AG04450 (cell line): ENCODE measurements at regions of chr10 and their contacts with region 1.

Region 1: GRCh38 chr10:127207081-127207480 is 10.7 kb upstream of the INSYN2A start:
- DNase-seq: no peak
- H3K4me3 ChIP-seq: no peak overlapping the region
- H3K27ac ChIP-seq: no peak overlapping the region
- H3K27me3 ChIP-seq: no peaks in the 10 kb centered on the region
- CTCF ChIP-seq: no peak

Region 2: GRCh38 chr10:127168261-127168660 is 38.8 kb before region 1 on chr10:
- CTCF ChIA-PET with region 1: no interaction called
- POLR2A ChIA-PET with region 1: no interaction called
- DNase-seq: no peak
- H3K4me3 ChIP-seq: no peak overlapping the region
- H3K27ac ChIP-seq: no peak overlapping the region
- H3K27me3 ChIP-seq: no peaks in the 10 kb centered on the region
- CTCF ChIP-seq: no peak

Region 3: GRCh38 chr10:127196230-127196954 is 10.7 kb before region 1 on chr10 and contains the start of gene INSYN2A:
- CTCF ChIA-PET with region 1: interaction called, 15 read pairs
- POLR2A ChIA-PET with region 1: no interaction called
- DNase-seq: no peak
- H3K4me3 ChIP-seq: peak within 1 kb of the TSS; percentile 64
- H3K27ac ChIP-seq: no peak within 1 kb of the TSS
- H3K27me3 ChIP-seq: peaks cover 8% of the 10 kb centered on the region
- CTCF ChIP-seq: peak; percentile 52
- polyA plus RNA-seq, gene INSYN2A: 0.35 and 0.36 TPM in 2 replicates

Region 4: DNA sequence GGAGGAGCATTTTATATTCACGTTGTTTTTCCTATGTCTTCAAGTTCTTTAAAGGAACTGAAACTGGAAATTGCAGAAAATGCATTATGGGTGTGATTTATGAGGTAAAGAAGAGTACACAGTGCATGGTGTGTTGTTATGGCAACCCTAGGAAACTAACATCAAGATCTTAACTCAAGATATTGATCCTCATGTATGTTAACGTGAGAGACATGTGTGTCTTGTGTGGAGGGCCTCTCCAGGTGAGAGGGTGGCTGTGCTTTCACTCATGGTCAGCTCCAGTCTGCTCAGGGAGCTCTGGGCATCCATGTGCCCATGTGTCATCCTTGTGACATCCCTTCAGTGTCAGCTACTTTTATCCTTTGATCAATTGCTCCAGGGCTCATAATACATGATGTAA is 14.1 kb after region 1 on chr10:
- CTCF ChIA-PET with region 1: no interaction called
- POLR2A ChIA-PET with region 1: no interaction called
- DNase-seq: no peak
- H3K4me3 ChIP-seq: no peak overlapping the region
- H3K27ac ChIP-seq: no peak overlapping the region
- H3K27me3 ChIP-seq: no peaks in the 10 kb centered on the region
- CTCF ChIP-seq: no peak